CD8-positive, alpha-beta memory T cell (primary cell): ENCODE measurements at regions of chr2 and their contacts with region 1.

Region 1: DNA sequence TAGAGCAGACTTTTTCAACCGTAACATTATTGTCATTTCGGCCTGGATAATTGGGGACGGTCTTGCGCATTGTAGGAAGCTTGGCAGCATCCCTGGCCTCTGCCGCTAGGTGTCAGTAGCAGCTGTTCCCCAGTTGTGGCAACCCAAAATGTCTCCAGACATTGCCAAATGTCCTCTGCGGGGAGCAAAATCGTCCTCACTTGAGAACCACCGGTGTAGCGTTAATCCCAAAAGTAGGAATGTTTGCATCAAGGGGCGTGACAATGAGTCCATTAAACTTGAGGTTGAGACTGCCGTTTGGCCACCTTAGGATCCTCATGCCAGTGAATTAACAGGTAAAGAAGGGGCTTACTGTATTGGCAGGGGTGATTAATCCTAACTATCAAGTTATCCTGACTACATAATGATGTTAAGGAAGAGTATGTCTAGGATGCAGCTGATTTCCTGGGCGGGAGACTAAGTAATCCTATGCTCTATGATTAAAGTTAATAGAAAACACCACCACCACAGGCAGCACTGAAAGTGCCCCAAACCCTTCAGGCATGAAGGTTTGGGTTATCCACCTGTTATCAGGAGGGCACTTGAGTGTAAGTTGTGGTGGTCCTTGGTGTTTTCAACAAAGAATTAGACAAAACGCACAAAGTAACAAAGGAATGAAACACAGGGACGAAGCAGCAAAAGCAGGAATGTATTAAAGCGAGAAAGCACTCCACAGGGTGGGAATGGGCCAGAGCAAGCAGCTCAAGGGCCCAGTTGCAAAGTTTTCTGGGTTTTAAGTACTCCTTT is 4.9 kb upstream of the ZC3H8 start:
- DNase-seq: peak; percentile 71 to 87 (median 75)
- H3K4me3 ChIP-seq: peak overlapping the region; percentile 28
- H3K4me3 Mint-ChIP-seq: peak overlapping the region; percentile 11 to 81 (median 70)
- H3K27ac ChIP-seq: no peak overlapping the region
- H3K27ac Mint-ChIP-seq: peak overlapping the region in 6 of 8 donors; percentile 9 to 93 (median 78)
- H3K4me1 ChIP-seq: peaks cover 13% of the 10 kb centered on the region
- H3K4me1 Mint-ChIP-seq: peaks cover 6 to 9% (median 7%) of the 10 kb centered on the region in 3 donors
- H3K27me3 ChIP-seq: no peaks in the 10 kb centered on the region
- H3K27me3 Mint-ChIP-seq: peaks cover 0 to 9% of the 10 kb centered on the region in 2 donors

Region 2: GRCh38 chr2:112121682-112122254 is 137.9 kb before region 1 on chr2:
- CTCF ChIA-PET with region 1: interaction called, 15 read pairs
- POLR2A ChIA-PET with region 1: no interaction called
- DNase-seq: peak in 3 of 5 donors; percentile 6 to 50 (median 26)
- H3K4me3 ChIP-seq: no peak overlapping the region
- H3K4me3 Mint-ChIP-seq: no peak overlapping the region
- H3K27ac ChIP-seq: no peak overlapping the region
- H3K27ac Mint-ChIP-seq: no peak overlapping the region
- H3K4me1 ChIP-seq: no peaks in the 10 kb centered on the region
- H3K4me1 Mint-ChIP-seq: no peaks in the 10 kb centered on the region
- H3K27me3 ChIP-seq: no peaks in the 10 kb centered on the region
- H3K27me3 Mint-ChIP-seq: no peaks in the 10 kb centered on the region

Region 3: DNA sequence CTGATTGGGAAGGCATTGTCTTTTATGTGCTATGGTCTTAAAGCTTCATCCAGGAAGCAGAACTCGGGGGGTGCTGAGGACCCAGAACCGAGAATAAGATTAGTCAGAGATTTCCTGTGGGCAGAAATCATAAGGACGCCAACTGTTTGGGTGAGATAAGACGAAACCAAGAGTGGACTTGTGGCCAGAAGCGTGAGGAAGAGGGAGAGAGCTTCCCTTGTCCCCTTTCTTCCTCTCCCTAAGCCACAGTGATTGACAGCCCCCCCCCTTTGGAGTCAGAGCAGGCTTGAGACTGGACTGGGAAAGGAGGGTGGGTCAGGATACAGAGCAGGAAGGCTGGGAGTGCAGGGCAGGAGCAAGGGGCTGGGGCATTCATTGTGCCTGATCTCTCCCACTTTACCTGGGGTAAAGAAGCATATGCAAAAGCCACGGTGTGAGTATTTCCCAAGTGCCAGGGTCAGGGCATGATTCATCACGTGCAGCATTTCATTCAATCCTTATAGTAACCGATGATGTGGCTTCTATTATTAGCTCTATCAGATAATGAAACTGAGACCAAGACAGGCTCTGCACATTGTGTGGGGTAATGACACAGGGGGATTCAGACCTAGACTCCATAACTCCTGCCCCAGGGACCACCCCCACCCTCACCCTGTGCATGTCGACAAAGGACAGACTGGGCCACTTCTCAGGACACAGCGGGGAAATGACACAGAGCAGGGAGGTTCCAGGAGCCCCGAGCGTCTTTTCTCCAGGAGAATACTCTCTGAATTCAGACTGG is 864.7 kb after region 1 on chr2:
- CTCF ChIA-PET with region 1: no interaction called
- POLR2A ChIA-PET with region 1: no interaction called
- DNase-seq: no peak
- H3K4me3 ChIP-seq: no peak overlapping the region
- H3K4me3 Mint-ChIP-seq: no peak overlapping the region
- H3K27ac ChIP-seq: no peak overlapping the region
- H3K27ac Mint-ChIP-seq: peak overlapping the region in 1 of 8 donors; percentile 38
- H3K4me1 ChIP-seq: no peaks in the 10 kb centered on the region
- H3K4me1 Mint-ChIP-seq: peaks cover 6 to 20% (median 12%) of the 10 kb centered on the region in 3 donors
- H3K27me3 ChIP-seq: no peaks in the 10 kb centered on the region
- H3K27me3 Mint-ChIP-seq: peaks cover 8 to 26% of the 10 kb centered on the region in 2 donors